Activated T-helper 1 cell treated with anti-CD3 and anti-CD28 coated beads, Interleukin-12 subunit alpha, Interleukin-12 subunit beta, Interleukin-2, Interleukin-4 antibody, amounts not matched to agents 30 ng/mL and 10 ng/mL and 1 ng/mL, durations not matched to agents 14 hours and 24 hours and 36 hours (primary cell): ENCODE measurements at regions of chr17 and their contacts with region 1.

Region 1: GRCh38 chr17:76492989-76493501 is 8.2 kb downstream of the RHBDF2 start:
- DNase-seq: peak; percentile 61
- H3K4me3 Mint-ChIP-seq: peak overlapping the region; percentile 85
- H3K27ac Mint-ChIP-seq: peak overlapping the region; percentile 95
- H3K4me1 Mint-ChIP-seq: peaks cover 56% of the 10 kb centered on the region
- H3K27me3 Mint-ChIP-seq: no peaks in the 10 kb centered on the region

Region 2: GRCh38 chr17:76264755-76265596 is 228.1 kb before region 1 on chr17 and contains the start of gene UBALD2:
- intact Hi-C with region 1: no loop called
- DNase-seq: peak; percentile 99
- H3K4me3 Mint-ChIP-seq: peak within 1 kb of the TSS; percentile 94
- H3K27ac Mint-ChIP-seq: peak within 1 kb of the TSS; percentile 94
- H3K4me1 Mint-ChIP-seq: peaks cover 63% of the 10 kb centered on the region
- H3K27me3 Mint-ChIP-seq: no peaks in the 10 kb centered on the region
- total RNA-seq, gene UBALD2: 206 and 217 TPM in 2 replicates

Region 3: GRCh38 chr17:76452660-76453430 is 40.2 kb before region 1 on chr17 and contains the start of gene UBE2O:
- intact Hi-C with region 1: loop called (anchors 2 kb)
- DNase-seq: peak; percentile 93
- H3K4me3 Mint-ChIP-seq: peak within 1 kb of the TSS; percentile 91
- H3K27ac Mint-ChIP-seq: peak within 1 kb of the TSS; percentile 87
- H3K4me1 Mint-ChIP-seq: peaks cover 42% of the 10 kb centered on the region
- H3K27me3 Mint-ChIP-seq: peaks cover 10% of the 10 kb centered on the region
- total RNA-seq, gene UBE2O: 44.9 and 45.1 TPM in 2 replicates

Region 4: GRCh38 chr17:76515274-76515949 is 22.4 kb after region 1 on chr17:
- intact Hi-C with region 1: loop called (anchors 1 kb)
- DNase-seq: peak; percentile 86
- H3K4me3 Mint-ChIP-seq: peak overlapping the region; percentile 72
- H3K27ac Mint-ChIP-seq: peak overlapping the region; percentile 92
- H3K4me1 Mint-ChIP-seq: peaks cover 59% of the 10 kb centered on the region
- H3K27me3 Mint-ChIP-seq: peaks cover 5% of the 10 kb centered on the region

Region 5: DNA sequence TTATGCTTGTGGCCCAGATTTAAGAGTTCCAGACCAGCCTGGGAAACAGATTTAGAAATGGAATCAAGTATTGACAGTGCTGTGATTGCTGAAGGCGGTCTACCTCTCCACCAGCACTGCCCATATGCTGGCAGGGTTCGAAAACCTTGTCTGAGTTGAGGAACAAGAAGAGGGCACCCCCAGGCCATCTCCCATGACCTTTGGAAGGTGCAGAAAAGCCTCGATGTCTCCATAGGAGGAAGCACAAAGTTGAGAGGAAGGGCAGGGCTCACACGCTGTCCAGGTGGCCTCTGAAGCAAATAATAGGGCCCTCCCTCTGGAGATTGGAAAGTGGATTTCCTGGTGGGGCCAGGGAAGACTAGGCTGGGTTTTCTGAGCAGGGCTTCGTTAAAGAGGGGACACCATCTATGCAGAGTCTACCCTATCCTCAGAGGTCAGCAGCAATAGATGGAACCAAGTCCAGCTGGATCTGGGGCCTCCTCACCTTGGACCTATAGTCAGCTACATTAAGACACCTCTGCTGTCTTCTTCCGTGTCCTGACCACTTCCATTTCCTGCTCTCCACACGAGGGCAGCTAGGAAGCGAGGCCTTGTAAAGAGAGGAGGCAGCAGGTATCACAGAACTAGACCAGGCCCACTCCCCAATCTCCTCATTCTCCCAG is 165.1 kb after region 1 on chr17:
- intact Hi-C with region 1: no loop called
- DNase-seq: no peak
- H3K4me3 Mint-ChIP-seq: no peak overlapping the region
- H3K27ac Mint-ChIP-seq: no peak overlapping the region
- H3K4me1 Mint-ChIP-seq: peaks cover 31% of the 10 kb centered on the region
- H3K27me3 Mint-ChIP-seq: peaks cover 3% of the 10 kb centered on the region